ENCODE measurements at regions of chr2 and their contacts with region 1.

Region 1: GRCh38 chr2:240310645-240311044 is 124.8 kb upstream of the GPC1 start:
- DNase-seq: peak in 1 of 2 donors; percentile 33
- H3K4me3 ChIP-seq: no peak overlapping the region
- H3K27ac ChIP-seq: no peak overlapping the region
- H3K4me1 ChIP-seq: no peaks in the 10 kb centered on the region
- H3K27me3 ChIP-seq: no peaks in the 10 kb centered on the region
- CTCF ChIP-seq: no peak
- POLR2A ChIP-seq: no peak

Region 2: GRCh38 chr2:240277073-240277806 is 33.4 kb before region 1 on chr2:
- intact Hi-C with region 1: no loop called
- DNase-seq: no peak
- H3K4me3 ChIP-seq: no peak overlapping the region
- H3K27ac ChIP-seq: no peak overlapping the region
- H3K4me1 ChIP-seq: no peaks in the 10 kb centered on the region
- H3K27me3 ChIP-seq: no peaks in the 10 kb centered on the region
- CTCF ChIP-seq: no peak
- POLR2A ChIP-seq: no peak

Region 3: DNA sequence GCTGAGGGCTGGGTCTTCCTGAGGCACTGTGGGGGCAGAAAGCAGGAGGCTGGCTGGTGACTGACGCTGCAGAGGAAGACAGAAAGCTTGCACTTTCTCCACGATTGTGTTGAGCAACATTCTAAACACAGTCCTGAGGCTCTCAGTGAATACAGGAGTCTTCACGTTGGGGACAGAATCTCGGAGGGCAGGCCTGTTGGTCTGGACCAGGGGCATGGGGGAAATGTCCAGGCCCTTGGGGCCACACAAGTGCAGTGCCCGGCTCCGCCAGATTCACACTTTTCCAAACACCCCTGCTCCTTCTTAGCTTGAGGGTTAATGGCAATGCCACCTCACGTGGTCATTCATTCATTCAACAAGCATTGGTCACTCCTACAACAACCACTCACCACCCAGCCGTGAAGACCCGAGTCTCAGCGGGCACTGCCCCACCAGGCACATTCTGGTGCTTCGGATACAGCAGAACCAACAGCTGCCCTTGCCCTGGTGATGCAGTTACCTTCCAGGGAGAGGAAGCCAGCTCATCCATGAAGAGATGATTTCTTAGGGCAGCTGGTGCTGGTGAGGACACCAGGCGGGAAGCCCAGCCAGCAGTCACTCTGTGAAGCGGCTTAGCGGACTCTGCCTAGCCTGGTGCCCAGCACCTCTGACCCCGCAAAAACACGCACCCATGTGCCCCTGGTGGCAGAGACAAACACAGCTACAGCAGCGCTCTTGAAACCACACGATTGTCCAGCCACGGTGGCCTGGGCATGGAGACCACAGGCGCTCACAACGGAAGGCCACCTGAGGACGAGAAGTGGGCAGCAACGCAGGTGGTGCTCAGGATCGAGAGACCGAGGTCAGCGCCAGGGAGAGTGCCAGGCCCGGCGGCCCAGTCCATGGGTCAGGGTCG is 113.9 kb after region 1 on chr2:
- intact Hi-C with region 1: loop called (anchors 5 kb)
- DNase-seq: peak in 1 of 2 donors; percentile 37
- H3K4me3 ChIP-seq: no peak overlapping the region
- H3K27ac ChIP-seq: no peak overlapping the region
- H3K4me1 ChIP-seq: no peaks in the 10 kb centered on the region
- H3K27me3 ChIP-seq: no peaks in the 10 kb centered on the region
- CTCF ChIP-seq: no peak
- POLR2A ChIP-seq: no peak